ENCODE measurements at regions of chr16 and their contacts with region 1.

Region 1: GRCh38 chr16:22694887-22695382 is 119.0 kb upstream of the HS3ST2 start:
- DNase-seq: no peak
- ATAC-seq: no peak
- H3K4me3 ChIP-seq: no peak overlapping the region
- H3K27ac ChIP-seq: no peak overlapping the region
- H3K4me1 ChIP-seq: no peaks in the 10 kb centered on the region
- H3K27me3 ChIP-seq: peaks cover 0 to 21% of the 10 kb centered on the region in 2 experiments; a peak in 3 of 5 replicates
- CTCF ChIP-seq: no peak
- EP300 ChIP-seq: no peak
- POLR2A ChIP-seq: no peak
- RAD21 ChIP-seq: no peak

Region 2: GRCh38 chr16:22659933-22660332 is 35.0 kb before region 1 on chr16:
- CTCF ChIA-PET with region 1: no interaction called
- POLR2A ChIA-PET with region 1: no interaction called
- in situ Hi-C with region 1: no loop called
- intact Hi-C with region 1: loop called (anchors 5 kb)
- DNase-seq: no peak
- ATAC-seq: no peak
- H3K4me3 ChIP-seq: no peak overlapping the region
- H3K27ac ChIP-seq: no peak overlapping the region
- H3K4me1 ChIP-seq: no peaks in the 10 kb centered on the region
- H3K27me3 ChIP-seq: peaks cover 0 to 47% of the 10 kb centered on the region in 2 experiments; a peak in 3 of 5 replicates
- CTCF ChIP-seq: no peak
- EP300 ChIP-seq: no peak
- POLR2A ChIP-seq: no peak
- RAD21 ChIP-seq: no peak

Measured in HepG2 (cell line).